ENCODE measurements at regions of chr20 and their contacts with region 1.

Region 1: GRCh38 chr20:30286162-30286561 is 971.3 kb upstream of the DEFB115 start:
- DNase-seq: no peak
- H3K4me3 Mint-ChIP-seq: no peak overlapping the region
- H3K27ac Mint-ChIP-seq: no peak overlapping the region
- H3K4me1 Mint-ChIP-seq: peaks cover 22% of the 10 kb centered on the region
- H3K27me3 Mint-ChIP-seq: no peaks in the 10 kb centered on the region

Region 2: DNA sequence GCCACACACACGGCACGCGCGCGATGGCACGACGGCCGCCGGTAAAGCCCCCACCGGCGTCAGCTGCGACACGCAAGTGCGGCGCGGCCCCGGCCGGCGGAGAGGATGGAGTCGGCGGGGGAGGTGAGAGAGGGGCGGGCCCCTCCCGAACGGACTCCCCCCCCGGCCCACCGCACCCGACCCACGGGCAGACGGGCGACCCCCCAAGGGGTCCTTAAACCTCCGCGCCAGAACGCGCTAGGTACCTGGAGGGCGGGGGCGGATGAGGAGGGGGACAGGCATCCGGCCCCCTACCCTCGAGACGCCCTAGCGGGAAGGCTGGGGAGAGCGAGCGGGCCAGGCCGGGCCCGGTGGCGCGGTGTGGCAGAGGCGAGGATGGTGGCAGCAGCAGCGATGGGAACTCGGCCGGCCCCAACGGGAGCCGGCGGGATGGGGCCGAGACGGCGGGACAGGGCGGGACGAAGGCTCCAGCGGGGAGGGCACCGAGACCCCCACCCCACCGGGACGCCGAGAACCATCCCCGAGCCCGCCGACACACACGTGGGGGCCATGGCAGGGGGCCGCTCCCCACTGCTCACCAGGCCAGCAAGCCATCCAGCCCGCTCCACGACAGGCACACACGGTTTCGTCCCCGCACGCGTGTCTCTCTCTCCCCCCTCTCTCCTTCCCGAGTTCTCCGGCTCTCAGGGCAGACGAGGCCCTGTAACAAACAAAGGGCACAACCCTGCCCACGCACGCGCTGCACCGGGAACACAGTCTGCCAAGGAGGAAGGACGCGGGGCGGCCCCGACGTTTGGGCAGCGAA is 544.1 kb before region 1 on chr20:
- CTCF ChIA-PET with region 1: no interaction called
- intact Hi-C with region 1: no loop called
- DNase-seq: no peak
- H3K4me3 Mint-ChIP-seq: no peak overlapping the region
- H3K27ac Mint-ChIP-seq: no peak overlapping the region
- H3K4me1 Mint-ChIP-seq: no peaks in the 10 kb centered on the region
- H3K27me3 Mint-ChIP-seq: peaks cover 10% of the 10 kb centered on the region

Region 3: DNA sequence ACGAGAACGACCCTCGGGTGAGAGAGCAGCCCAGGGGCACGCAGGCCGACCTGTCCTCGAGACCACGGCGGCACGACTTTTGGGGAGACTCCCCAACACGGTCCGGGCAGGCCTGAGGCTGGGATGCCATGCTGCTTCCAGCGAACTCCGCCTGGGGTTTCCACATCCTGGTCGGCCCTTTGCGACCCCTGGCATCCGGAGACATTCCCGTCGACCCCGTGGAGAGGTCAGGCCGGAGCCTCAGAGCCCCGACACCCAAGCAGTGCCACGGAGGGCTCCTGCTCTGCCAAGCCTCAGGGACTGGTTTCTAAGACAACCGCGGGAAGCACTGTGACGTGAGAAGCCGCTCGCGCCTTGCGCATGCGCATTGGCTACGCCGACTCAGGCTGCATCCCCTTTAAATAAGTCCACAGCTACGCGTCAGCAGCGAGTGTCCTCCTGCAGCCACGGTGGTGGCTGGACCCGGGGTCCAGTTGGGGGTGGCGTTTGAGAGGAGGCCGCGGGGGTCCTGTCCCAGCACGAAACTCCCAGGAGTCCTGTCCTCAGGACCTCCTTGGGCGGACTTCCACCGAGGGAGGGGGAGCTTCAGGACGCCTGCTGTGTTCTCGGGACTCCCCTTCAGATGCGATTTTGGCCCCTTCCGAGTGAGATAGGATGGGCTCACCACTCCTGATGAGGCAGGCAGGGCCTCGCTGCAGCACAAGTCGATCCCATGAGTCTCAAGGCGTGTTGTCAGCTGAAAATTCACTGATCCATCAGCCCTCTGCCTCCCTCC is 118.0 kb before region 1 on chr20:
- CTCF ChIA-PET with region 1: no interaction called
- intact Hi-C with region 1: loop called (anchors 10 kb)
- DNase-seq: no peak
- H3K4me3 Mint-ChIP-seq: no peak overlapping the region
- H3K27ac Mint-ChIP-seq: no peak overlapping the region
- H3K4me1 Mint-ChIP-seq: peaks cover 32% of the 10 kb centered on the region
- H3K27me3 Mint-ChIP-seq: no peaks in the 10 kb centered on the region

Region 4: DNA sequence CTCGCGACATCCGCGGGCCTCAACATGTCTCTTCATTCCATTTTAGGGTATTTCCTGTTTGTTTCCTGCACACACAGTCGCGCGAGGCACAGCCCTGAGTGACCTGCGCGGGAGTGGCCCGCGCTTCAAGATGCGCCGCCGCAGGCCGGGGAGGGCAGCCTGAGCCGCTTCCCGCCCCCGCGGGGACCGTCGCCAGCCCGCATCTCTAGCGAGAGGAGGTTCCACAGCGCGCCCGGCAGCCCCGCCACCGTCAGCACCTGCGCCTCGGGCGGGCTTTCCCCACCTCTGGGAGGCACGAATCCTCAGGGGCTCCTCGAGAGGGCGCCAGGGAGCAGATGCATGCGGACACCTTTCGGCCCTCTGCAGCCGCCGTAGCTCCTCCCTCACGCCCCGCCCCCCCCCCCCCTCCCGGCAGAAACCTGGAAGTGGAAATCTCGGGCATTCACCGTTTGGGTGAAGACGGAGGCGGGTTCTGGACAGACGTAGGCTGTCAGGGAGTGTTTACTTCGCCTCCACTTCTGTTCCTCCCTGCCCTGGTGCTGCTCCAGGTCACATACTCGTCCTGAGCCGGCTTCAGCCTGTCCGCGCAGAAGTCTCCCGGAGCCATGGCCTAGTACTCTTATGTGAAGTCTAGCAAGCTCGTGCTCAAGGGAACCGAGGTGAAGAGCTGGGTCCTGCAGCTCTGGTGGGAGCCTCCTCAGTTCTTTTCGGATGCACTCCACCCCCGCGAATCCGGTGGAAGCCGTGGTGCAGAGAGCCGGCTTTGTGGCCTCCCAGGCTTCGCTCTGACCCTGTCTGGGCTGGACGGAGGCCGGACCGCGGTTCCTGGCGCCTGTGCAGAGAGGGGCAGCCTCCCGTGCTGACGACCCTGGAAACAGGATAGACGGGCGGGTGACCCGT is 90.9 kb after region 1 on chr20:
- CTCF ChIA-PET with region 1: no interaction called
- intact Hi-C with region 1: loop called (anchors 2 kb)
- DNase-seq: peak; percentile 91
- H3K4me3 Mint-ChIP-seq: peak overlapping the region; percentile 88
- H3K27ac Mint-ChIP-seq: peak overlapping the region; percentile 88
- H3K4me1 Mint-ChIP-seq: peaks cover 24% of the 10 kb centered on the region
- H3K27me3 Mint-ChIP-seq: no peaks in the 10 kb centered on the region

Region 5: DNA sequence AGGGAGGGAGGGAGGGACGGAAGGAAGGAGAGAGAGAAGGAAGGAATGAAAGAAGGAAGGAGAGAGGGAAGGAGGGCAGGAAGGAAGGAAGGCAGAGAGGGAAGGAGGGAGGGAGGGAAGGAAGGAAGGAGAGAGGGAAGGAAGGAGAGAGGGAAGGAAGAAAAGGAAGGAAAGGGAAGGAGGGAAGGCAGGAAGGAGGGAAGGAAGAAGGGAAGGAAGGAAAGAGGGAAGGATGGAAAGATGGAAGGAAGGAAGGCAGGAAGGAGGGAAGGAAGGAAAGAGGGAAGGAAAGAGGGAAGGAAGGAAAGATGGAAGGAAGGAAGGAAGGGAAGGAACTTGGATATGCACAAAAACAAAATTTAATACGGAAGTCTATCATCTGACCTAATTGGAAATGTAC is 126.8 kb after region 1 on chr20:
- CTCF ChIA-PET with region 1: no interaction called
- intact Hi-C with region 1: no loop called
- DNase-seq: no peak
- H3K4me3 Mint-ChIP-seq: no peak overlapping the region
- H3K27ac Mint-ChIP-seq: no peak overlapping the region
- H3K4me1 Mint-ChIP-seq: no peaks in the 10 kb centered on the region
- H3K27me3 Mint-ChIP-seq: no peaks in the 10 kb centered on the region

Region 6: GRCh38 chr20:30488941-30489613 is 202.9 kb after region 1 on chr20:
- CTCF ChIA-PET with region 1: no interaction called
- intact Hi-C with region 1: no loop called
- DNase-seq: no peak
- H3K4me3 Mint-ChIP-seq: no peak overlapping the region
- H3K27ac Mint-ChIP-seq: no peak overlapping the region
- H3K4me1 Mint-ChIP-seq: no peaks in the 10 kb centered on the region
- H3K27me3 Mint-ChIP-seq: peaks cover 9% of the 10 kb centered on the region

Measured in activated naive CD4-positive, alpha-beta T cell treated with anti-CD3 and anti-CD28 coated beads for 36 hours (primary cell).